CD14-positive monocyte (primary cell): ENCODE measurements at regions of chr13 and their contacts with region 1.

Region 1: GRCh38 chr13:23579072-23579895 is 9.1 kb downstream of the TNFRSF19 start:
- DNase-seq: peak; percentile 74 to 81 (median 80)
- H3K4me3 ChIP-seq: peak overlapping the region; percentile 49 to 87 (median 87)
- H3K4me3 Mint-ChIP-seq: peak overlapping the region; percentile 79 to 90
- H3K27ac ChIP-seq: peak overlapping the region in 1 of 2 donors; percentile 71
- H3K27ac Mint-ChIP-seq: peak overlapping the region in 4 of 7 donors; percentile 37 to 50 (median 46)
- H3K4me1 ChIP-seq: peaks cover 14 to 16% of the 10 kb centered on the region in 2 donors
- H3K4me1 Mint-ChIP-seq: peaks cover 12% of the 10 kb centered on the region
- H3K27me3 ChIP-seq: peaks cover 17 to 35% of the 10 kb centered on the region in 2 donors
- H3K27me3 Mint-ChIP-seq: peaks cover 30 to 48% (median 44%) of the 10 kb centered on the region in 3 donors
- CTCF ChIP-seq: no peak

Region 2: GRCh38 chr13:23541221-23541824 is 38.0 kb before region 1 on chr13:
- intact Hi-C with region 1: no loop called
- DNase-seq: no peak
- H3K4me3 ChIP-seq: no peak overlapping the region
- H3K4me3 Mint-ChIP-seq: no peak overlapping the region
- H3K27ac ChIP-seq: no peak overlapping the region
- H3K27ac Mint-ChIP-seq: no peak overlapping the region
- H3K4me1 ChIP-seq: no peaks in the 10 kb centered on the region
- H3K4me1 Mint-ChIP-seq: no peaks in the 10 kb centered on the region
- H3K27me3 ChIP-seq: peaks cover 2 to 6% of the 10 kb centered on the region in 2 donors
- H3K27me3 Mint-ChIP-seq: peaks cover 8 to 16% (median 11%) of the 10 kb centered on the region in 3 donors
- CTCF ChIP-seq: no peak

Region 3: DNA sequence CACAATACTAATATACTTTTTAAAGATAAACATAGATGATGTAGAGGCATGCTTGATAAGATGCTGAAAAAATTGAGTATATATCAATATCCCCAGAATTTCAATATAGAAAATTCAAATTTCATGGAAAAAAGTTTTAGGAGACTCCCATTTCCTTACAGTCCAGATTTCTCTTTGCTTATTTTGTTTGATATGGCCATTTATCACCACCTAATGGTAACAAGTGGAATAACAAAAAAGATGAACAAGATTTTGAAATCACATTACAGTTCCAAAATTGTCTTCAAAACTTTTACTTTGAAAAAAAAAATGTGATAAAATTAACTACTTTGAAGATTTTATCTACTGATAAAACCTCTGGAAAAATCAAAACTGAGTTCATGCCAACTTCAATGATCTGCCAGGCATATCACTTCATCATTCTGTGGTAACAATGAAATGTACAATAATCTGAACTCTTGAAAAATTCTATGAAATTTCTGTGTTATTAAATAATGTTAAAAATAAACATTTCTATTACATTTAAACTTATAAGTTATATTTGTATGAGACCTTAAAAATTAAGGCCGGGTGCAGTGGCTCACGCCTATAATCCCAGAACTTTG is 292.4 kb after region 1 on chr13:
- intact Hi-C with region 1: loop called in 1 of 2 experiments (anchors 10 kb)
- DNase-seq: no peak
- H3K4me3 ChIP-seq: no peak overlapping the region
- H3K4me3 Mint-ChIP-seq: no peak overlapping the region
- H3K27ac ChIP-seq: no peak overlapping the region
- H3K27ac Mint-ChIP-seq: no peak overlapping the region
- H3K4me1 ChIP-seq: no peaks in the 10 kb centered on the region
- H3K4me1 Mint-ChIP-seq: no peaks in the 10 kb centered on the region
- H3K27me3 ChIP-seq: no peaks in the 10 kb centered on the region
- H3K27me3 Mint-ChIP-seq: peaks cover 0 to 2% (median 0%) of the 10 kb centered on the region in 3 donors
- CTCF ChIP-seq: peak; percentile 74

Region 4: GRCh38 chr13:23888658-23889614 is 309.7 kb after region 1 on chr13 and contains the start of gene MIPEP:
- intact Hi-C with region 1: loop called in 1 of 2 experiments (anchors 10 kb)
- DNase-seq: peak; percentile 80 to 85 (median 82)
- H3K4me3 ChIP-seq: peak within 1 kb of the TSS; percentile 68 to 92 (median 82)
- H3K4me3 Mint-ChIP-seq: peak within 1 kb of the TSS; percentile 83 to 91
- H3K27ac ChIP-seq: peak within 1 kb of the TSS; percentile 42 to 50
- H3K27ac Mint-ChIP-seq: peak within 1 kb of the TSS; percentile 2 to 87 (median 79)
- H3K4me1 ChIP-seq: peaks cover 14 to 24% of the 10 kb centered on the region in 2 donors
- H3K4me1 Mint-ChIP-seq: peaks cover 20% of the 10 kb centered on the region
- H3K27me3 ChIP-seq: no peaks in the 10 kb centered on the region
- H3K27me3 Mint-ChIP-seq: no peaks in the 10 kb centered on the region
- CTCF ChIP-seq: peak; percentile 65
- polyA plus RNA-seq, gene MIPEP: 1.2 to 9.9 (median 7.7) TPM